ENCODE measurements at regions of chr3 and their contacts with region 1.

Region 1: DNA sequence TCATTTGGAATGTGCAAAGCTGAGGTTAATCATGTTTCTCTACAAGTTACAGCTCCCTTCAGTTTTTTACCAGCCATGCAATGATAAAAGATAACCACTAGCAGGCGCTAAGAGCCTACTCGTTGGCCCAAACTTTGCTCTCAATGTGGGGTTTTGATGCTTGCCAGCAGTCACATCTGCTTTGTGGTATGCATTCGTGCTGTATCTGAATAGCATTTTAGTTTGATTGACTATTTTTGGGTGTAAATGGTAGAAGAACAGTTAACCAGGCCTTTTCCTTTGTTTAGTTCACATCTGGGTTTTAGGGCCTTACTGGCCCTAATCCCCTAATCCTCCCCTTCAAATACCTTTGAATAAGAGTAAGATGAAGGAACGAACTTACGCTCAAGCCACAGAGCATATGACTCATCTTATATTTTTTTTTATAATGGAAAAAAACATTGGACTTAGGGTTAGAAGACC is 4.4 kb upstream of the CLDN11 start:
- DNase-seq: peak; percentile 83
- H3K4me3 Mint-ChIP-seq: no peak overlapping the region
- H3K27ac Mint-ChIP-seq: no peak overlapping the region
- H3K4me1 Mint-ChIP-seq: peaks cover 4% of the 10 kb centered on the region
- H3K27me3 Mint-ChIP-seq: peaks cover 37% of the 10 kb centered on the region

Region 2: GRCh38 chr3:169863458-169863899 is 550.8 kb before region 1 on chr3:
- intact Hi-C with region 1: loop called (anchors 10 kb)
- DNase-seq: peak; percentile 90
- H3K4me3 Mint-ChIP-seq: no peak overlapping the region
- H3K27ac Mint-ChIP-seq: no peak overlapping the region
- H3K4me1 Mint-ChIP-seq: peaks cover 16% of the 10 kb centered on the region
- H3K27me3 Mint-ChIP-seq: peaks cover 19% of the 10 kb centered on the region

Region 3: DNA sequence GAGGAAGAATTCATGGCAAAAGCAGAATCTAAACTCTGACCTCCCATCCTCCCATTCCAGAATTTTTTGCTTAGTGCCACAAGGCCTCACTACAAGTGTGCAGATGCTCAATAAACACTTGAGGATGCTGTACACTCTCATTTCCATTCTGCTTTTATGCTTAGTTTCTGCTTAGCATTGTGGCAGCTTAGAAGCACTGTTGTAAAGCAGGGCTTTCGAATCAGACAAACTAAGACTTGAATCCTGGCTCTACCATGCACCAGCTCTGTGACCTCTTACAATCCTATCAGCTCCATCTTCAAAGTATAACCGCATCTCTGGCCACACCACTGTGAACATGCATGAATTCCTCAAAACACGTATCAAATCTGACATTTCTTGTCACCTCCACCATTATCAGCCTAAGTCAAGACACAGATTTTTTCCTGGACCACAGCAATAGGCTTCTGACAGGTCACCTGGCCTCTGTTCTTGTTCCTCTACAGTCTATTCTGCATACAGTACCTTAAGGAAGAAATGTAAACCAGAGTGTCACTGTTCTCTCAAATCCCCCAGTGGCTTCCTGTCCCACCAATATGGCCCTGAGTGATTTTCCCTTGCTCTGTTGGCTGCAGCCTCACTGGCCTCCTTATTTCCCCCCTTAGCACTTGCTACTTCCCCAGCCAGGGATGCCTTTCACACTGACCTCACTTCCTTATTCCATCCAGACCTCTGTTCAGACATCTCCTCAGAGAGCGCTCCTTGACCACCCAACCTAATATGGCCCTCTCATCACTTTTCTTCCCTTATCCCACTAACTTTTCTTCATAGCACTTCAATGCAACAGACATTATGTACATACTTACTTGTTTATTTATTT is 224.6 kb before region 1 on chr3:
- intact Hi-C with region 1: loop called (anchors 5 kb)
- DNase-seq: no peak
- H3K4me3 Mint-ChIP-seq: no peak overlapping the region
- H3K27ac Mint-ChIP-seq: no peak overlapping the region
- H3K4me1 Mint-ChIP-seq: peaks cover 12% of the 10 kb centered on the region
- H3K27me3 Mint-ChIP-seq: peaks cover 12% of the 10 kb centered on the region

Region 4: GRCh38 chr3:170307671-170308403 is 106.4 kb before region 1 on chr3:
- intact Hi-C with region 1: loop called (anchors 5 kb)
- DNase-seq: no peak
- H3K4me3 Mint-ChIP-seq: no peak overlapping the region
- H3K27ac Mint-ChIP-seq: no peak overlapping the region
- H3K4me1 Mint-ChIP-seq: no peaks in the 10 kb centered on the region
- H3K27me3 Mint-ChIP-seq: no peaks in the 10 kb centered on the region

Region 5: GRCh38 chr3:170689893-170690660 is 275.8 kb after region 1 on chr3:
- intact Hi-C with region 1: loop called (anchors 5 kb)
- DNase-seq: peak; percentile 76
- H3K4me3 Mint-ChIP-seq: no peak overlapping the region
- H3K27ac Mint-ChIP-seq: no peak overlapping the region
- H3K4me1 Mint-ChIP-seq: no peaks in the 10 kb centered on the region
- H3K27me3 Mint-ChIP-seq: no peaks in the 10 kb centered on the region

Region 6: DNA sequence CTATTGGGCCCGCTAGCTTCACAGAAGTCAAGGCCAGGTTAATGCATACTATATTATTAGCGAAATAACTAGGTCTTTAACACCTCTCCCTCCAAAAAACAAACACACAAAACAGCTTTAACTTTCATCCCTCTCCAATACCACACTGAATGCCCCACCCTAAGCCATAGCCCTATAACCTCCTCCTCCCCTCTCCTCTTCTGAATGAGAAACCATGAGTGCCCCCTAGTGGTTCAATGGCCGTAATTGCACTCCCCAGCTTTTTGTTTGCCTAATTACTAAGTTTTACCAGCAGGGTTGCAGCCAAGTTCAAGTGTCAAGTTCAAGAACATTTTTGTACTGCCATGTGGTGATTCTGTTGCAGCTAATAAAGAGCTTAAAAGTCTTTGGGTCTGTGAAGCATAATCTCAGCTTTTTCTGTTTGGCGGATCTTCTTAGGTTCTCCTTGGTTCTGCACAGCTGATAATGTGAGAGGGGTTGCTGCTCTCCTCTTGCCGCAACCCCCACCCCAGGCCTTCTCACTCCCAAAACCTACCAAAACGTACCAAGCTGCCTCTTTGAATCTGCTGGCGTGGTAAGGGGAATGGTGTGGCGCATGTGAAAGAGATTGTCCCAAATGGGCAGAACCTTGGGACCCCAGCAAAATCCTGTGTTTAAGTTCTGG is 397.8 kb after region 1 on chr3:
- intact Hi-C with region 1: loop called (anchors 1 kb)
- DNase-seq: peak; percentile 90
- H3K4me3 Mint-ChIP-seq: no peak overlapping the region
- H3K27ac Mint-ChIP-seq: no peak overlapping the region
- H3K4me1 Mint-ChIP-seq: peaks cover 4% of the 10 kb centered on the region
- H3K27me3 Mint-ChIP-seq: peaks cover 2% of the 10 kb centered on the region